ENCODE measurements at regions of chr18 and their contacts with region 1.

Region 1: GRCh38 chr18:63155169-63155852 is 164.3 kb downstream of the BCL2 start:
- DNase-seq: peak; percentile 63
- ATAC-seq: peak; percentile 68

Region 2: GRCh38 chr18:63016270-63016669 is 139.0 kb before region 1 on chr18:
- intact Hi-C with region 1: loop called (anchors 2 kb)
- DNase-seq: peak; percentile 43
- ATAC-seq: no peak

Region 3: DNA sequence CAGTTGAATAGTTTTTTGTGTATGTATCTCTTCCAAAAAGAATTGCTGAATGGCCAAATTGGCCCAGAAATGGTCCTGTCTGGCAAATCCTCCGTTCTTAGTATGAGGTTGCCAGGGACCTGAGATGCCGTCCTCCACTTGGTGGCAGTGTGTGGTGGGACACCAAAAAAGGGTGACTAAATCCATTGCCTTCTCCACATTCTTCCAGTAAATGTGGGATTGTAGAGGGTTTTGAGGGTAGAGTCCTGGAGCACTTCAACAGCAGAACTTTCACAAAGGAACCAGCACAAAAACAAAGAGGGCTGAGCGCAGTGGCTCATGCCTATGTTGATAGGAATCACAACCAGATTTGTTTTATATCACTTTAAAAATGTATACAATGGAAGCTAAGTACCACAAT is 35.7 kb before region 1 on chr18:
- intact Hi-C with region 1: loop called (anchors 5 kb)
- DNase-seq: no peak
- ATAC-seq: peak; percentile 64

Region 4: GRCh38 chr18:63199743-63200241 is 44.5 kb after region 1 on chr18:
- intact Hi-C with region 1: loop called (anchors 2 kb)
- DNase-seq: no peak
- ATAC-seq: peak; percentile 19

Region 5: DNA sequence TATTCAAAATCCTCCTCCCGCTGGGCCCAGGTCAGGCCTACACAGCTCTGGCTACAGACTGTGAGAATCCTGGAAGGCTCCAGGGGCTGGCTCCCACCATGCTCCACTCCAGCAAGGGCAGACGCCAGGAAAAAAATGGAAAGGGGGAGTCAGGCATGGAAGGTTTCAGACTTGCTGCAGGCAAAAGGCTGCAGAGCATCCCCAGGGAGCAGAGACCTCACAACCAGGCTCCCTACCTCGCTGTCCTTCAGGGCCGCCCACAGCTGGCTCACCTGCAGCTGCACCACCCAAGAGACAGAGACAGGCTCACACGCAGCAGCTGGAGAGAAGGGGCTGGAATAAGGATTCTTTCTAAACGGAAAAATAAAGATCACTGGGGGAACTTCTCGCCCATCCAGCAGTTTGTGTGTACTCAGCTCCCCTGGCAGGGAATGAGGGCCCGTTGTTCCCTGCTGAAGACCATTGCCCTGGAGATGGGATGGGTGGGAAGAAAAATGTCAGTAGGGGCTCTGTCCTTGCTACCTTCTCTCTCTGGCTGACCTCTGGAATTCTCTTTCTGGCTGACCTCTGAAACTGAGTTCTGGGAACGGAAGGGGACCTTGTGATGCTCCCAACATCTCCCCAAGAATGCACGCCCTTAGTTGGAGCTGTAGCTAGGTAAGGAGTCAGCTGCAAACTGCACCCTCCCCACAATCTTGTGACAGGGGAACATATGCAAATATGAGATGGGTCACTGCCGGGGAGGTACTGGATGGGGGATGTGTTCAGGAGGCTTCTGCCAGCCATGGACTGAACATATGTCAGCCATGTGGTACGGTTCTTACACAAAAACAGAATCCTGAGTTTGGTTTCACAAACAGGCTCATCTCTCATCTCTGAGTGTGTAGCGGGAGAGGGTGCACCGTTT is 129.8 kb after region 1 on chr18:
- intact Hi-C with region 1: no loop called
- DNase-seq: no peak
- ATAC-seq: peak; percentile 32

Region 6: GRCh38 chr18:63378919-63379638 is 223.8 kb after region 1 on chr18:
- intact Hi-C with region 1: no loop called
- DNase-seq: no peak
- ATAC-seq: no peak